CD4-positive, alpha-beta memory T cell (primary cell): ENCODE measurements at regions of chr7 and their contacts with region 1.

Region 1: GRCh38 chr7:139620676-139621344 is 97.3 kb downstream of the CLEC2L start:
- DNase-seq: peak in 4 of 5 donors; percentile 47 to 55 (median 52)
- H3K4me3 ChIP-seq: no peak overlapping the region
- H3K4me3 Mint-ChIP-seq: no peak overlapping the region
- H3K27ac ChIP-seq: no peak overlapping the region
- H3K27ac Mint-ChIP-seq: peak overlapping the region in 2 of 7 donors; percentile 16 to 30
- H3K4me1 ChIP-seq: no peaks in the 10 kb centered on the region
- H3K4me1 Mint-ChIP-seq: peaks cover 16 to 23% (median 19%) of the 10 kb centered on the region in 4 donors
- H3K27me3 ChIP-seq: no peaks in the 10 kb centered on the region
- H3K27me3 Mint-ChIP-seq: no peaks in the 10 kb centered on the region

Region 2: DNA sequence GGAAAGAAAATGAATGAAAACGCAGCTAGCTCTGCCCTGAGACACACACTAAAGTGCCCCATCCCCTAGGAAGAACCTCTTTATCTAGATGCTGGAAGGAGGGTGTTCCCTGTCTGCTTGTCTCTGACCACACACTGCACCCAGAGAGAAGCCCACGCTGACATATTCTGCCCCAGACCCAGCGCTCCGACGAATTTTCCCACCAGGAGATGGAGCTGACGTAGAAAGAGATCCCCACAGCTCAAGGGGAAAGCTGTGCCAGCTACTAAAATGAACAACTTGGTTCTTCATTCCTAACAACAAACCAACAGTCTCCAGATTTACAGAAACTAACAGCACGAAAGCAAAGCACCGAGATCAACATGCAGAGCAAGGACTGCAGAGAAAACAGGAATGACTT is 713.0 kb before region 1 on chr7:
- CTCF ChIA-PET with region 1: no interaction called
- POLR2A ChIA-PET with region 1: no interaction called
- intact Hi-C with region 1: no loop called
- DNase-seq: no peak
- H3K4me3 ChIP-seq: no peak overlapping the region
- H3K4me3 Mint-ChIP-seq: no peak overlapping the region
- H3K27ac ChIP-seq: no peak overlapping the region
- H3K27ac Mint-ChIP-seq: no peak overlapping the region
- H3K4me1 ChIP-seq: peaks cover 17% of the 10 kb centered on the region
- H3K4me1 Mint-ChIP-seq: peaks cover 12 to 25% (median 14%) of the 10 kb centered on the region in 4 donors
- H3K27me3 ChIP-seq: no peaks in the 10 kb centered on the region
- H3K27me3 Mint-ChIP-seq: peaks cover 6 to 11% of the 10 kb centered on the region in 2 donors

Region 3: DNA sequence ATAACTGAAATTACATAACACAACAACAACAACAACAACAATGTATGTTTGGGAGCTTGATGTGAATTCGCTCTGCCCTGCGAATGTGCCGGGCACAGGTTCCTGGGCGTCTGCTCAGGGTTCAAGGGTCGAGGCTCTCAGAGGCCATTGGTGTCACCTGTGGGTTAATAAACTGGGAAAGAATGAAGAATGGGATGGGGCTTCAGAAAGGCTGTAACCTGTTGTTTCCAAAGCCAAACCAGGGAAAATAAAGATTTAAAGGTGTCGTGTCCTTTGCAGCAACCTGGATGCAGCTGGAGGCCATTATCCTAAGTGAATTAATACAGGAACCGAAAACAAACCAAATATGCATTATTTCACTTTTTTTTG is 120.1 kb before region 1 on chr7:
- CTCF ChIA-PET with region 1: interaction called, 12 read pairs
- POLR2A ChIA-PET with region 1: no interaction called
- intact Hi-C with region 1: no loop called
- DNase-seq: no peak
- H3K4me3 ChIP-seq: no peak overlapping the region
- H3K4me3 Mint-ChIP-seq: peak overlapping the region in 4 of 8 donors; percentile 55 to 94 (median 90)
- H3K27ac ChIP-seq: no peak overlapping the region
- H3K27ac Mint-ChIP-seq: no peak overlapping the region
- H3K4me1 ChIP-seq: no peaks in the 10 kb centered on the region
- H3K4me1 Mint-ChIP-seq: peaks cover 2 to 11% (median 5%) of the 10 kb centered on the region in 4 donors
- H3K27me3 ChIP-seq: no peaks in the 10 kb centered on the region
- H3K27me3 Mint-ChIP-seq: peaks cover 0 to 5% of the 10 kb centered on the region in 2 donors

Region 4: DNA sequence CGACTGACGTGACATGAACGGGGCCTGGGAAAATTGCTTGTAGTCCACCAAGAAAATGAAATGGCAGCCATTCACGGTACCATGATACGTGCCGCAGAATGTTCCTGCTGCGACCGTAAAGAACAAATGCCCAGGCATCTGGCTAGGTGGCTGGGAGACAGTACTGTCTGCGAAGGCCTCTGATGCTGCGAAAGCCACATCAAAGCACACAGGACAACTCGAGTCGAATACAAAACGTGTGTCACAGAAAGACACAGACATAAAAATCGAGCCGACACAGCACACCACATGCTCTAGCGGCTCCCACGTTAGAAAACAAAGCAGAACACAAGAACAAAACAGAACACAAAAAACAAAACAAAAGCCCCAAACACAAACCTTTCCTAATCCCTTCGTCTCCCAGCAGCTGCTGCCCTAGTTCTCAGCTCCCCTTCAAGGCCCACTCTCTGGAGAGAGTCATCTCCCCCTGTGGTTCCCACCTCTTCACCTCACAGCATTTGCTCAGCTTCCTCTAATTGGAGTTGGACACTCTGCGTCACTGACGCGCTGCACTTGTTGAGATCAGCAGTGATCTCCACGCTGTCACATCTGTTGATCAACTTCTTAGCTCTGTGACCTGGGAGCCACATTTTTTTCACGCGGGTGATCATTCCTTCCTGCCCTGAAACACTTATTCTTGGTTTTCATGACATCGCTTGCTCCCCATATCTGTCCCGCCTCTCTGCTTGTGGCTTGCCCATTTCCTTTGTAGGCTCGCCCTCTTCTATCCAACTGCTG is 14.9 kb after region 1 on chr7:
- CTCF ChIA-PET with region 1: interaction called, 15 read pairs
- POLR2A ChIA-PET with region 1: interaction called, 3 read pairs
- intact Hi-C with region 1: no loop called
- DNase-seq: peak; percentile 69 to 90 (median 85)
- H3K4me3 ChIP-seq: no peak overlapping the region
- H3K4me3 Mint-ChIP-seq: peak overlapping the region; percentile 51 to 88 (median 74)
- H3K27ac ChIP-seq: peak overlapping the region; percentile 36
- H3K27ac Mint-ChIP-seq: peak overlapping the region; percentile 73 to 98 (median 94)
- H3K4me1 ChIP-seq: peaks cover 36% of the 10 kb centered on the region
- H3K4me1 Mint-ChIP-seq: peaks cover 33 to 64% (median 45%) of the 10 kb centered on the region in 4 donors
- H3K27me3 ChIP-seq: no peaks in the 10 kb centered on the region
- H3K27me3 Mint-ChIP-seq: no peaks in the 10 kb centered on the region

Region 5: GRCh38 chr7:140003913-140004382 is 383.1 kb after region 1 on chr7:
- CTCF ChIA-PET with region 1: interaction called, 14 read pairs
- POLR2A ChIA-PET with region 1: no interaction called
- intact Hi-C with region 1: loop called (anchors 1 kb)
- DNase-seq: peak in 4 of 5 donors; percentile 22 to 41 (median 32)
- H3K4me3 ChIP-seq: no peak overlapping the region
- H3K4me3 Mint-ChIP-seq: no peak overlapping the region
- H3K27ac ChIP-seq: no peak overlapping the region
- H3K27ac Mint-ChIP-seq: peak overlapping the region in 3 of 7 donors; percentile 8 to 59 (median 38)
- H3K4me1 ChIP-seq: no peaks in the 10 kb centered on the region
- H3K4me1 Mint-ChIP-seq: peaks cover 0 to 5% (median 3%) of the 10 kb centered on the region in 4 donors
- H3K27me3 ChIP-seq: no peaks in the 10 kb centered on the region
- H3K27me3 Mint-ChIP-seq: no peaks in the 10 kb centered on the region